ENCODE measurements at regions of chr15 and their contacts with region 1.

Region 1: GRCh38 chr15:82197733-82198594 is 64.6 kb downstream of the EFL1 start:
- DNase-seq: peak in 4 of 5 donors; percentile 64 to 71 (median 67)
- ATAC-seq: peak; percentile 44 to 90 (median 82)
- H3K4me3 ChIP-seq: no peak overlapping the region
- H3K27ac ChIP-seq: no peak overlapping the region
- H3K4me1 ChIP-seq: peaks cover 0 to 23% (median 7%) of the 10 kb centered on the region in 12 donors
- H3K27me3 ChIP-seq: no peaks in the 10 kb centered on the region
- CTCF ChIP-seq: peak; percentile 61 to 84 (median 78)
- POLR2A ChIP-seq: no peak

Region 2: DNA sequence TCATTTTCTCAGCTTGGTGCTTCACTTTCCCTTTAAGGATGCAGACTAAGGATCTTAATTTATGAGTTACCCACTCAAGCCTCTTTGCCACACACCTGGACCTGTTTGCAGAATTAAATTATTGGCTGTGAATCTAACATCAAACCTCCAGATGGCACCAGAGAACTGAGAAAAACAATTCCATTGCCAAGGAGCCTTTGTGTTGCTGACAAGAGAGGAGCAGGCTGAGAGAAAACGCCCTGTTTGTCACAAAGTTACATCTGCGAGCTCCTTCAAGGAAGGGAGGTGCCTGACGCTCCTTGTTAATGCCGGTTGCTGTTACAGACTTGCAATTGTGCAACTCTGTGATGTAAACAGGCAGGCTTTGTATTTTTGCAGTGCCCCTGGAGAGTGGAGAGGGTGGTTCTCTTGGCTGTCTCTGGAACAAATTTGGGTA is 787.6 kb before region 1 on chr15:
- intact Hi-C with region 1: loop called in 7 of 10 experiments (anchors 2 to 10 kb)
- DNase-seq: peak in 4 of 5 donors; percentile 18 to 66 (median 44)
- ATAC-seq: peak; percentile 73 to 92 (median 89)
- H3K4me3 ChIP-seq: no peak overlapping the region
- H3K27ac ChIP-seq: no peak overlapping the region
- H3K4me1 ChIP-seq: peaks cover 0 to 10% (median 2%) of the 10 kb centered on the region in 12 donors
- H3K27me3 ChIP-seq: no peaks in the 10 kb centered on the region
- CTCF ChIP-seq: peak; percentile 29 to 61 (median 52)
- POLR2A ChIP-seq: no peak

Region 3: GRCh38 chr15:81492331-81492963 is 705.5 kb before region 1 on chr15:
- intact Hi-C with region 1: loop called in 2 of 10 experiments (anchors 5 to 10 kb)
- DNase-seq: peak in 2 of 5 donors; percentile 12 to 25
- ATAC-seq: no peak
- H3K4me3 ChIP-seq: no peak overlapping the region
- H3K27ac ChIP-seq: no peak overlapping the region
- H3K4me1 ChIP-seq: peaks cover 0 to 7% (median 0%) of the 10 kb centered on the region in 12 donors
- H3K27me3 ChIP-seq: peaks cover 0 to 7% (median 0%) of the 10 kb centered on the region in 9 donors
- CTCF ChIP-seq: no peak
- POLR2A ChIP-seq: no peak

Region 4: DNA sequence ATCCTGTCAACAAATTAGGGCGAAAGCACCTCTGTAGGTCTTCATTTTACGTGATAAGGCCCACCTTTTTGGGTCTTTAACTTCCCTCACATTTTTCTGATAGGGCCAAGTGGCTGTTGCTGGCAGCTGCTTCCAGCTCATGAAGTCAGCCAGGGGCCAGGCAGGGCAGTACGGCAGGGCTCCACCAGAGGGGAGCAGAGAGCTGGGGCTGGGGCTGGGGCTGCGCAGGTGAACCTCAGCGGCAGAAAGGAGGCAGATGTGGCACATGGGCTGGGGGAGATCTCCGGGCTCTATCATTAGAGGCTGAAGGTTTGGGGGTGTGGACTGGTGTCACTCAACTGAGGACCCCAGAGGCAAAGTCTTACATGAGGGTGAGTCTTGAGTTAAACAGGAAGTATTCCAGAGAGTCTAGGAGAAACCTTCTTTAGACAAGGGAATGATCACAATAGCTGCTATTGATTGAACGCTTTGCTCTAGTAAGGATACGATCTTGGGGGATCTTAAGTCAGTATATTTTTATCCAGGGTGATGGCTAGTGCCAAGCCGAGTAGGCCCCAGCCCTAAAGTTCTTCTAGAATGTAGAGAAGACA is 89.4 kb before region 1 on chr15:
- intact Hi-C with region 1: loop called in 6 of 10 experiments (anchors 1 to 10 kb)
- DNase-seq: peak; percentile 21 to 84 (median 55)
- ATAC-seq: peak; percentile 85 to 96 (median 91)
- H3K4me3 ChIP-seq: no peak overlapping the region
- H3K27ac ChIP-seq: no peak overlapping the region
- H3K4me1 ChIP-seq: no peaks in the 10 kb centered on the region
- H3K27me3 ChIP-seq: no peaks in the 10 kb centered on the region
- CTCF ChIP-seq: peak; percentile 57 to 83 (median 70)
- POLR2A ChIP-seq: no peak

Region 5: GRCh38 chr15:82177291-82178010 is 20.5 kb before region 1 on chr15:
- intact Hi-C with region 1: loop called in 1 of 10 experiments (anchors 2 kb)
- DNase-seq: no peak
- ATAC-seq: no peak
- H3K4me3 ChIP-seq: no peak overlapping the region
- H3K27ac ChIP-seq: no peak overlapping the region
- H3K4me1 ChIP-seq: peaks cover 0 to 14% (median 0%) of the 10 kb centered on the region in 12 donors
- H3K27me3 ChIP-seq: no peaks in the 10 kb centered on the region
- CTCF ChIP-seq: no peak
- POLR2A ChIP-seq: no peak

Measured in heart left ventricle (tissue), 16 donors.